Posterior cingulate gyrus (tissue), 11 donors: ENCODE measurements at regions of chr3 and their contacts with region 1.

Region 1: GRCh38 chr3:157081681-157082210 is 78.2 kb downstream of the CCNL1 start:
- DNase-seq: peak; percentile 82 to 98 (median 94)

Region 2: GRCh38 chr3:156542715-156543555 is 538.8 kb before region 1 on chr3:
- intact Hi-C with region 1: loop called (anchors 5 kb)
- DNase-seq: no peak

Region 3: DNA sequence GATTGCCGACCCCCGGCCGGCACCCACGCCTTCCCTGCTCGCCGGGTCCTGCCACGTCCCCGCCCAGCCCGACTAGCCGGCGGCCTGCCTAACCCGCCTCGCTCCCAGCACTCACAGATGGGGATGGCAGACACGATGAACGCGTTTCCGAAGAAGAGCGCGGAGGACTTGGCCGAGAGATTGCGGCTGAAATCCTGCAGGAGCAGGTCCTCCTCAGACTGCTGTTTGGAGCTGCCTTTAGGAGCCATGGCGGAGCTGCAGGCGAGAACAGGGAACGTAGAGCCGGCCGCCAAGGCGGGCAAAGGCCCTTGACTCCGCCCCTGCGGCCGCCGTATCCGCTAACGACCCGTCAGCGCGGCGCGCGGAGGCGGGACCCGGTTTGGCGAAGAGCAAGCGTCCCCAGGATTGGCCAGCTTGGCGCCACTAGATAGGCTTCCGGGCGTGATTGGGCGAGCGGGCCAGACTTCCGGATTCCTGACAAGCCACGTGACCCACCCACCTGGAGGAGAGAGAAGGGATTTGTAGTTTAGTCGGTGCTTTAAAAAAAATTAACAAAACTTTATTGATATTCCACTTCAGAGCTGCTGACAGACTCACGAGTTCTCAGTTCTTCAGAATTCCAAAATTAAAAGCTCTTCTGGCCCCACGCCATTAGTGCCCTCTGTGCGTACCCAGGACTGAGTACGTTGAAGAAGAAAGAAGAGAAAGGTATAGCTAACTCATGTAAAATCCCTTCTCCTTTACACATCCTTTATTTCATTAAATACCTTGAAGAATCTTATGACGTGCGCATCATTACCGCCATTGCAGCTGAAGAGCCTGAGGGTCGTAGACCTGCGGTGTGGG is 526.7 kb before region 1 on chr3 and contains the start of gene SSR3:
- intact Hi-C with region 1: loop called (anchors 5 kb)
- DNase-seq: peak; percentile 98 to 100 (median 99)

Region 4: DNA sequence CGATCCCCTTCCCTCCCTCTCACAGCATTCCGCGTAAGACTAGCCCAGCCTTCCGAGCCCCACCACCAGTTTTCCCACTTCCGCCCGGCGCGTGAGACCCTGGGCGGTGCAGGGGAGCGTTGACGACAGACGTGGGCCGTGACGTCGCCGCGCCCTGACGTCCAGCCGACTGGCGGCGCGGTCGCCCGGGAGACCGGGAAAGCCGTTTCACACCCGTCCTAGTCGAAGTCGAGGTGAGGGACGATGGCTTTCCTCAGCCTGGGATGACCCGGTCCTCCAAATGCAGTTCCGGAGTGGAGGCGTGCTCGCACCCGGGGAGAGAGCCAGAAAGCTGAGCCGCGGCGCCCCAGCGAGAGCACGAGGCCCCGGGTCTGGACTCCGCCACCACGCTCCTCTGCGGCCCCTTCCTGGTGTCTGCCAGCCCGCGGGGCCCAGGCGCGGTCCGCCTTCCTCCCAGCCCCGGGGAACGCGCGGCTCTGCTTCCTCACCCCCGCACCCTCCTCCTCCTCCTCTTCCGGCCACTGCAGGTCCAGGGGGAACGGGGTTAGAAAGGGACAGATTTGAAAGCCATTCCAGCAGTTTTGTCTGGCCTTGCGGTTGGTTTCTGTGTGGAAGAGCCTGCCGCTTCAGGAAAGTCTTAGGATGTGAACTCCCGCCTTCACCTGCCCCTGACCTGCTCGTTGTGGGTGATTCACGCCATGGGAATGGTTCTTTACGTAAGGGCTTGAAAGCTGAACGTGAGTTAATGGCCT is 255.4 kb before region 1 on chr3 and contains the start of gene LEKR1:
- intact Hi-C with region 1: loop called (anchors 5 kb)
- DNase-seq: peak; percentile 65 to 97 (median 82)